ENCODE measurements at regions of chr17 and their contacts with region 1.

Region 1: GRCh38 chr17:58344047-58344790 is 7.8 kb downstream of the SUPT4H1 start:
- DNase-seq: peak; percentile 98
- ATAC-seq: peak; percentile 76
- H3K4me3 ChIP-seq: peak overlapping the region; percentile 81
- H3K27ac ChIP-seq: peak overlapping the region; percentile 100
- H3K4me1 ChIP-seq: peaks cover 53% of the 10 kb centered on the region
- H3K27me3 ChIP-seq: no peaks in the 10 kb centered on the region
- CTCF ChIP-seq: no peak
- EP300 ChIP-seq: peak; percentile 85 to 96
- POLR2A ChIP-seq: peak; percentile 79
- RAD21 ChIP-seq: peak; percentile 28; the same call in 1 of the 2 replicates

Region 2: GRCh38 chr17:58329035-58329809 is 15.0 kb before region 1 on chr17:
- CTCF ChIA-PET with region 1: interaction called, 51 read pairs
- POLR2A ChIA-PET with region 1: interaction called, 219 read pairs
- RAD21 ChIA-PET with region 1: interaction called, 227 read pairs
- SMC1A ChIA-PET with region 1: interaction called, 249 read pairs
- in situ Hi-C with region 1: no loop called
- intact Hi-C with region 1: loop called (anchors 1 kb)
- DNase-seq: peak; percentile 97
- ATAC-seq: peak; percentile 51
- H3K4me3 ChIP-seq: peak overlapping the region; percentile 56; the same call in 1 of the 2 replicates
- H3K27ac ChIP-seq: peak overlapping the region; percentile 60
- H3K4me1 ChIP-seq: peaks cover 22% of the 10 kb centered on the region
- H3K27me3 ChIP-seq: no peaks in the 10 kb centered on the region; a peak in 1 of 4 replicates
- CTCF ChIP-seq: peak in 2 of 3 experiments; percentile 75 to 79; a peak in 4 of 6 replicates
- EP300 ChIP-seq: 0 out of 4 replicates have a peak, but pooled peaks of 1 of the 2 experiments have one; percentile 7
- POLR2A ChIP-seq: no peak
- RAD21 ChIP-seq: peak; percentile 44

Region 3: DNA sequence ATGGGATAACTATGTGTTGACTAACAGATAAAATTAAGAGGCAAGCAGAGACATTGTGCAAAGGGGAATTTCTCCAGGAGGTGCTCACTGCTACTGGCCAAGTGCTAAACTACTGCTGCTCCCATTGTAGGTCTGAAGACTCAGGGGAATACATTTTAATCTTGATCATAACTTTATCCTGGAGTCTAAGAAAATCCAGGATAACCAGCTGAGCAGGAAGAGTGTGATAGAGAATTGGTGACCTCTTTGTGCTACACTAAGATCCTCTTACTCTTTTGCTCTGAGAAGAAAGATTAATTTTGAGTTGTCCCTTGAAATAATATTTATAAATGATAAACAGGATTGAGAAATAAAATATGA is 67.2 kb after region 1 on chr17:
- CTCF ChIA-PET with region 1: interaction called, 102 read pairs
- POLR2A ChIA-PET with region 1: interaction called, 373 read pairs
- RAD21 ChIA-PET with region 1: interaction called, 323 read pairs
- SMC1A ChIA-PET with region 1: interaction called, 195 read pairs
- in situ Hi-C with region 1: no loop called
- intact Hi-C with region 1: loop called (anchors 2 kb)
- DNase-seq: no peak
- ATAC-seq: peak; percentile 11; the same call in 2 of the 3 replicates
- H3K4me3 ChIP-seq: peak overlapping the region; percentile 57
- H3K27ac ChIP-seq: peak overlapping the region; percentile 48
- H3K4me1 ChIP-seq: no peaks in the 10 kb centered on the region
- H3K27me3 ChIP-seq: no peaks in the 10 kb centered on the region; a peak in 1 of 4 replicates
- CTCF ChIP-seq: no peak
- EP300 ChIP-seq: no peak
- POLR2A ChIP-seq: no peak
- RAD21 ChIP-seq: no peak

Region 4: GRCh38 chr17:58427807-58428206 is 83.6 kb after region 1 on chr17:
- CTCF ChIA-PET with region 1: interaction called, 5 read pairs
- POLR2A ChIA-PET with region 1: interaction called, 6 read pairs
- RAD21 ChIA-PET with region 1: interaction called, 20 read pairs
- SMC1A ChIA-PET with region 1: interaction called, 6 read pairs
- in situ Hi-C with region 1: no loop called
- intact Hi-C with region 1: no loop called
- DNase-seq: no peak
- ATAC-seq: no peak
- H3K4me3 ChIP-seq: no peak overlapping the region
- H3K27ac ChIP-seq: no peak overlapping the region
- H3K4me1 ChIP-seq: no peaks in the 10 kb centered on the region; the same call in 1 of the 2 replicates
- H3K27me3 ChIP-seq: no peaks in the 10 kb centered on the region
- CTCF ChIP-seq: no peak
- EP300 ChIP-seq: no peak
- POLR2A ChIP-seq: no peak
- RAD21 ChIP-seq: no peak